Panc1 (cell line): ENCODE measurements at regions of chr3 and their contacts with region 1.

Region 1: DNA sequence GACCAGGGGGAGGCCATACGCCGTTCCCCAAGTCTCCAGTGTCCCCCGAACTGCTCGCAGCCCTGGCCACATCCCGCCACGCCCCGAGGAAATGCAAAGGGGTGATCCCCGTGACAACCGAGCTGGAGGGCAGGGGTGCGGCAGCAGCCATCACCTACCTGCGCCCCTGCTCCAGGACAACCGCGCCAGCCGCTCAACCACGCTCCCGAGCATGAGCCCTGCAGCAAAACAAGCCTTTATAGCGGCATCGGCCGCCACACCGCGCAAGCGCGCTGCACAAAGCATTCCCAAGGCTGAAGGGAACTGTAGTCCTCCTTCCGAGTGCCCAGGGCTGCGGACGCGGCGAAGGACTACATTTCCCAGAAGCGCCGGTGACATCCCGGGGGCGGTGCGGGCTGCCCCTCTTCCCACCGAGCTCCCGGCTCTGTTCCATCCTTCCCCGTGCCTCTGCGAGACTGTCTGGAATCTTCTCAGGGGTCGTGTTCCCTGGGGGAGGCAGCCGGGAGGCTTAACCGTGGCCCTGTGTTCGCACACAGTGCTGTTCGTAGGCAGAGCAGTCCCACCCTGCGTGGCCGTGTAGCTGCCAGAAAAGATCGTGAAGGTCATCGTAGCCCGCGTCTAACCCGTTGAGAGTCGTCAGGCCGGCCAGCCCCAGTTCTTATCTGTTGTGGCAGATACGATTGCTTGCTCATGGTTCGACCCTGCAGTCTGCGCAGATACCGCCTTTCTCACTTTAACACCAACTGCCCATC is at the start of gene ABCC5:
- DNase-seq: peak; percentile 65
- ATAC-seq: peak; percentile 99
- H3K4me3 ChIP-seq: peak within 1 kb of the TSS; percentile 73 to 96
- H3K27ac ChIP-seq: peak within 1 kb of the TSS; percentile 92
- H3K4me1 ChIP-seq: peaks cover 19% of the 10 kb centered on the region
- H3K27me3 ChIP-seq: no peaks in the 10 kb centered on the region
- CTCF ChIP-seq: no peak; the same call in 1 of the 2 replicates
- total RNA-seq, gene ABCC5: 35.1 TPM

Region 2: DNA sequence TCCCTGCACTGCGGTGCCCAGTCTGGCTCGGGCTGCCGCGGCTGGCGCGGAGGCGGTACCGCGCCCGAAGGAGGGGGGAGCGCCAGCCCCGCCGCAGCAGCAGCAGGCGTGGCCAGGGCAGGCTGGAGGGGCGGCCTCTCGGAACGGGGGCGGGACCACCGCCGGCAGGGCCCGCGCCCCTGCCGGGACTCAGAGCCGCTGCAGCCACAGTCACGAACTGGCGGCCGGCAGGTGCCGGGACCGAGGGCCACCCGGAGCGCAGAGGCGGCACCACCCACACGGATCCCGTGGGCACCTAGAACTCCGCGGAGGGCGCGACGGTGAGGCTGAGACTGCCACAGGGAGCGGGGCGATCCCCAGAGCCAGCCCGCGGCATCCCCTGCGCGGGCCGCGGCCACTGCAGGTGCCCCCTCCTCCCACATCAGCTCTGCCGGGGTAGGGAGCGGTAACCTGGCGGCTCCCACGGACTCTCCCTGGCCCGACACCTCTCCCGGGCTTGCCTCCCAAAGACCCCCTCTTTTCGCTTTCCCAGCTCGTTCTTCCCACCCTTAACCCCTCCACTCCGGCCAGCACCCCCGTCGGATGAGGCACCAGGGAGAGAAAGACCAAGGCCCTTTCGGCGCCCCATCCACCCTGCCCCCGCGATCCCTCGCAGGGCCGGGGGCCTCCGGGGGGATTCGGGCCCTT is 211.7 kb after region 1 on chr3 and contains the start of gene VWA5B2:
- CTCF ChIA-PET with region 1: interaction called, 10 read pairs
- POLR2A ChIA-PET with region 1: no interaction called
- in situ Hi-C with region 1: no loop called
- intact Hi-C with region 1: no loop called
- DNase-seq: no peak
- ATAC-seq: peak; percentile 90
- H3K4me3 ChIP-seq: peak within 1 kb of the TSS; percentile 41 to 60
- H3K27ac ChIP-seq: no peak within 1 kb of the TSS
- H3K4me1 ChIP-seq: no peaks in the 10 kb centered on the region; the same call in 1 of the 2 replicates
- H3K27me3 ChIP-seq: peaks cover 14% of the 10 kb centered on the region; the same call in 1 of the 2 replicates
- CTCF ChIP-seq: no peak; the same call in 1 of the 2 replicates
- total RNA-seq, gene VWA5B2: 0.28 TPM

Region 3: DNA sequence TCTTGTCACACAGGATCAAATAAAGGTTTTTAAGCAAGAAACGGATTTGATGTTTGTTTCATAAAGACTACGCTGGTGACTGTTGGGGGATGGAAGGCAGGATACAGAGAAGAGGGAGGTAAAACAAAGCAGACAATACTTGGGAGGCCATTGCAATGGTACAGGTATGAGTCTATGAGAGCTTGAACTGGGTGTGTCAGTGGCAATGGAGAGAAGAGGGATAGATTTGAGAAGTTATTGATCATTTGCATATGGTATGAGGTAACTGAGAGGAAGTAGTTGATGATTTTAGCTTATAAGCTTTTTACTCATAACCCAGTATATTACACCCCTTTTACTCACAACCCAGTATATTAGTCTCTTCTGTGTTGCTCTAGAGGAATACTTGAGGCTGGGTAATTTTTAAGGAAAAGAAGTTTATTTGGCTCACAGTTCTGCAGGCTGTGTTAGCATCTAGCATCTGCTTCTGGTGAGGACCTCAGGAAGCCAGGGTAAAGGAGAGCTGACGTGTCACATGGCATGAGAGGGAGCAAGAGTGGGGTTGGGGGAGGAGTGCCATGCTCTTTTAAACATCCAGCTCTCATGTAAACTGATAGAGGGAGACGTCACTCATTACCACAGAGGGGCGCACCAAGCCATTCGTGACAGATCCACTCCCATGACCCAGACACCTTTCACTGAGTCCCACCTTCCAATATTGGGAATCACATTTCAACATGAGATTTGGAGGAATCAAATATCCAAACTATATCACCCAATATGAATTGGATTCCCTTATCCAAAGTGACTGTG is 948.0 kb after region 1 on chr3:
- CTCF ChIA-PET with region 1: no interaction called
- POLR2A ChIA-PET with region 1: no interaction called
- in situ Hi-C with region 1: no loop called
- intact Hi-C with region 1: no loop called
- DNase-seq: no peak
- ATAC-seq: no peak; the same call in 1 of the 2 replicates
- H3K4me3 ChIP-seq: no peak overlapping the region
- H3K27ac ChIP-seq: no peak overlapping the region
- H3K4me1 ChIP-seq: no peaks in the 10 kb centered on the region
- H3K27me3 ChIP-seq: no peaks in the 10 kb centered on the region
- CTCF ChIP-seq: no peak